ENCODE measurements at regions of chr11 and their contacts with region 1.

Region 1: DNA sequence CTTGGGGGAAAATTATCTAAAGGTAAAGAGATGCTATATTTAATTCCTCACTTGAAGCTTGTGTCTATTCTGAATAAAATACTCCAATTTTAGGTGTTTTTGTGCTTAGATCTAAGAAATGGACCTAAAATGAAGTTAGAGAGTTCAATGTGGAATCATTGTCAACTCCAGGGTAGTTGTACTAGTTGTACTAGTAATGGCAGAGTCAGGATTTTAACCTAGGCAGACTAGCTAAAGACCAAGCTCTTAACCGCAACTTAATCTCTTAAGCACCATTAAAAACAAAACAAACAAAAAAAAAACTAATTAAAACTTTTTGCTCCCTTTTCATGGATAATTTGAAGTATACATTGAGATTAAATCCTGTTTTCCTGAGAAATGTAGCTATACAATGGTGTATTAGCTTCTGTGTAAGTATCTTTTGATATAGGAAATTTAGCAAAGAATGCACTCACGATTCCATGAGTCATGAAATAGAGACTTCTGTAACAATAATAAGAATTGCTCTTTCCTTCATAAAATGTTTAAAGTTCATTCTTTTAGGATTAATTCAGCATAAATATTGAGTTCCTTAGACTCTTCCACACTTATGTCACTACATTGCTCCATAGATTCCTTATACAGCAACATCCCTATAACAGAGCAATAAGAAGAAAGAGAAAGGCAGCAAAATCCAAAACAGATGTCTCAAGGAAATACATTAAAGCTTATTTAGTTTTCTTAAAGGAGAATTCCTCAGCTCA is 26.5 kb upstream of the SOX6 start:
- DNase-seq: peak in 1 of 4 experiments; percentile 25
- ATAC-seq: peak; percentile 42
- H3K4me3 ChIP-seq: no peak overlapping the region
- H3K27ac ChIP-seq: peak overlapping the region; percentile 62; the same call in 2 of the 3 replicates
- H3K4me1 ChIP-seq: peaks cover 0 to 15% of the 10 kb centered on the region in 2 experiments; a peak in 3 of 5 replicates
- H3K27me3 ChIP-seq: no peaks in the 10 kb centered on the region
- CTCF ChIP-seq: no peak
- EP300 ChIP-seq: no peak
- POLR2A ChIP-seq: no peak
- RAD21 ChIP-seq: no peak

Region 2: GRCh38 chr11:16338393-16338792 is 44.4 kb before region 1 on chr11:
- CTCF ChIA-PET with region 1: no interaction called
- POLR2A ChIA-PET with region 1: no interaction called
- in situ Hi-C with region 1: no loop called
- intact Hi-C with region 1: no loop called
- DNase-seq: no peak
- ATAC-seq: peak; percentile 42
- H3K4me3 ChIP-seq: no peak overlapping the region
- H3K27ac ChIP-seq: peak overlapping the region; percentile 89
- H3K4me1 ChIP-seq: peaks cover 0 to 28% of the 10 kb centered on the region in 2 experiments; a peak in 4 of 5 replicates
- H3K27me3 ChIP-seq: no peaks in the 10 kb centered on the region
- CTCF ChIP-seq: no peak
- EP300 ChIP-seq: no peak
- POLR2A ChIP-seq: no peak
- RAD21 ChIP-seq: no peak

Region 3: GRCh38 chr11:16440136-16440535 is 57.3 kb after region 1 on chr11:
- CTCF ChIA-PET with region 1: no interaction called
- POLR2A ChIA-PET with region 1: no interaction called
- in situ Hi-C with region 1: no loop called
- intact Hi-C with region 1: loop called (anchors 10 kb)
- DNase-seq: no peak
- ATAC-seq: no peak
- H3K4me3 ChIP-seq: no peak overlapping the region
- H3K27ac ChIP-seq: no peak overlapping the region
- H3K4me1 ChIP-seq: no peaks in the 10 kb centered on the region
- H3K27me3 ChIP-seq: no peaks in the 10 kb centered on the region
- CTCF ChIP-seq: no peak
- EP300 ChIP-seq: no peak
- POLR2A ChIP-seq: no peak
- RAD21 ChIP-seq: no peak